OCI-LY7 (cell line): ENCODE measurements at regions of chr1 and their contacts with region 1.

Region 1: DNA sequence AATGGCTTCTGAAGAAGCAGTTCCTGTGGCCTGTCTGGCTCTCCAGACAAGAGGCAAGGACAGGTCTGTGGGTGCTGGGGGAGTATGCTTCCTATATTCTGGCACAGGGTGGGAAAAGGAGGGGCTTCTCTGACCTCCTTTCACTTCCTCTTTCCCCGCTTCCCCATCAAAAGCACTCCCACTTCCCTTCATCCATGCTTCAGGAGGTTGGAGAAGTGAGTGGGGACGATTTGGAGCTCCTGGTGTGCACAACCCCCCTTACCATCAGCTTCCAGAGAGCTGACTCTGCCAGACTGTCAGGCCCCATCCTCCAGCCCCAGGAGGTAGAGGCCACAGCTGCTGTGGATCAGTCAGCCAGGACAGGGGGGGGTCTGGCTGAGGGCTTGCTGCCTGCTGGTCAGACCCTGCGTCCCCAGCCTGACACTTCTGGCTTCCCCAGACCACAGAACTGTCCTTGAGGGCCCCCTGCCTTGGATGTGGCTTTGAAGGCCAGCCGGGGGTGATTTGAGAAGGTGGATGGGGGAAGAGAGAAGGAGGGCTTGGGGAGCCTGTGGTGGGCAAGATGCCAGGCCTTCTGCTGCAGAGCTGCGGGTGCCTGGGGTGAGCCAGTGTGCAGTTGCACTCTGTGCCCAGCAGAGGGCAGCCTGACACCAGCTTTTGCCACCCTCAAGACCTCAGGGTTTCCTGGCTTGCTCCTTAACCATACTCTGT is 21.5 kb upstream of the TMEM222 start:
- DNase-seq: peak; percentile 80
- H3K4me3 ChIP-seq: no peak overlapping the region
- H3K27ac ChIP-seq: no peak overlapping the region
- H3K4me1 ChIP-seq: peaks cover 9% of the 10 kb centered on the region
- CTCF ChIP-seq: peak; percentile 90

Region 2: GRCh38 chr1:26035959-26036755 is 1264.3 kb before region 1 on chr1:
- CTCF ChIA-PET with region 1: no interaction called
- POLR2A ChIA-PET with region 1: no interaction called
- intact Hi-C with region 1: no loop called
- DNase-seq: peak; percentile 71
- H3K4me3 ChIP-seq: peak overlapping the region; percentile 75
- H3K27ac ChIP-seq: no peak overlapping the region
- H3K4me1 ChIP-seq: peaks cover 7% of the 10 kb centered on the region
- CTCF ChIP-seq: peak; percentile 93

Region 3: DNA sequence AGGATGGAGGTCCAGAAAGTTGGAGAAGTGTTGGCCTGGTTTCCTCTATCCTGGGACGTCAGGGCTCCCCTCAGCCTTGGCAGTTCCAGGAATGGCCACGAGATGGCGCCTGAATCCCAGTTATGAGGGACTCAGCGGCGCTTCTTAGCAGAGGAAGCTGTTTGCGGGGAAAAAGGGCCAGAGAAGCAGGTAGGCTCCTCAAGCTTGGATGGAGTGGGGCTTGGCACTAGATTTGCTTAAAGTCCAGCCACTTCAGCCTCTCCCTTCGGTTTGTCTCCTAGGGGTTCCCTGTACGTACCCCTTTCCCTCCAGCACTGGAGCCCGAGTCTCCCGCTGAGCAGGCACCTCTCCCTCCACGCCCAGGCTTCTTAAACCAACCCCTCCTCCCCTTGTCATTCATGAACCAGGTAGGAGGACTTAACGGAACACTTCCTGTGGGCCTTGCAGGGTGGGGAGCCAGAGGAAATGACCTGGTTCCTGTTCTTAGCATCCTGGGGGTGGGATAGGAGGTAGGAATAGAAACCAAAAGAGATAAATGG is 255.8 kb before region 1 on chr1:
- CTCF ChIA-PET with region 1: no interaction called
- POLR2A ChIA-PET with region 1: no interaction called
- intact Hi-C with region 1: loop called (anchors 5 kb)
- DNase-seq: peak; percentile 86
- H3K4me3 ChIP-seq: no peak overlapping the region
- H3K27ac ChIP-seq: no peak overlapping the region
- H3K4me1 ChIP-seq: peaks cover 12% of the 10 kb centered on the region
- CTCF ChIP-seq: peak; percentile 88

Region 4: GRCh38 chr1:27122652-27123051 is 177.8 kb before region 1 on chr1:
- CTCF ChIA-PET with region 1: no interaction called
- POLR2A ChIA-PET with region 1: no interaction called
- intact Hi-C with region 1: no loop called
- DNase-seq: no peak
- H3K4me3 ChIP-seq: no peak overlapping the region
- H3K27ac ChIP-seq: no peak overlapping the region
- H3K4me1 ChIP-seq: no peaks in the 10 kb centered on the region
- CTCF ChIP-seq: no peak

Region 5: GRCh38 chr1:27321813-27322577 is 21.5 kb after region 1 on chr1 and contains the start of gene TMEM222:
- CTCF ChIA-PET with region 1: no interaction called
- POLR2A ChIA-PET with region 1: no interaction called
- intact Hi-C with region 1: no loop called
- DNase-seq: peak; percentile 98
- H3K4me3 ChIP-seq: peak within 1 kb of the TSS; percentile 98
- H3K27ac ChIP-seq: peak within 1 kb of the TSS; percentile 75
- H3K4me1 ChIP-seq: peaks cover 10% of the 10 kb centered on the region
- CTCF ChIP-seq: no peak
- total RNA-seq, gene TMEM222: 32.8 and 43.4 TPM in 2 replicates

Region 6: DNA sequence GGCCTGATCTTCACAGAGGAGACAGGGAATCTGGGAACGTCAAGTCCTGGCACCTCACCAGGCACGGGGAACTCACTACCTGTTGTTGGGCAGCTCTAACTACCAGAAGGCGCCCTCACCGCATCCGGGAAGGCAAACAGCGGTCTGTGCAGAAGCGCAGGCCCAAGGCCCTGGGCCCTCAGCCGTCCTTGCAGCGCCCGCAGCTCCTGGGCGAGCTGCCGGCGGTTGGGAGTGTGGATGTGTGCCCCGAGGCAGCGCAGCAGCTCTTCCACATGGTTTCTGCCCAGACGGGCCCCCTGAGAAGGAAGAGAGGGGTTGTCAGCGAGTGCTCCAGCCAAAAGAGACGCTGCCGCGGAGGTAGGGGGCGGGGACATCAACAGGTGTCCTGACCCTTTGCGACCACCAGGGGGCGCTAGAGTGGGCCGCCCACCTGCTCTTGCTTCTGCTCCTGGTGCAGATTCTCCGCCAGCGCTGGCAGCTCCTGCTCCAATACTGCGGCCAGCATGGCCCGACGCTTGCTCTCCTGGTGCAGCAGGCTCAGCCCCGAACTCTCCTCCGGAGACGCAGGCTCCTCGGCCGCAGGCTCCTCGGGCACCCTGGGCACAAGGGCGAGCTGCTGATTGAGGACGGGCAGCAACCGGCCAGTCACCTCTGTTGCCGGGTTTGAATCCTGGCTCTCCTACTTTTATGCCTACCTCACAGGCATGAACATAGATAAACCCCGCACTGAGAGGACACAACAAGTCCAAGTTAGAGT is 57.0 kb after region 1 on chr1:
- CTCF ChIA-PET with region 1: interaction called, 5 read pairs
- POLR2A ChIA-PET with region 1: no interaction called
- intact Hi-C with region 1: loop called (anchors 10 kb)
- DNase-seq: peak; percentile 77
- H3K4me3 ChIP-seq: peak overlapping the region; percentile 65
- H3K27ac ChIP-seq: peak overlapping the region; percentile 25
- H3K4me1 ChIP-seq: peaks cover 26% of the 10 kb centered on the region
- CTCF ChIP-seq: peak; percentile 87